ENCODE measurements at regions of chr11 and their contacts with region 1.

Region 1: DNA sequence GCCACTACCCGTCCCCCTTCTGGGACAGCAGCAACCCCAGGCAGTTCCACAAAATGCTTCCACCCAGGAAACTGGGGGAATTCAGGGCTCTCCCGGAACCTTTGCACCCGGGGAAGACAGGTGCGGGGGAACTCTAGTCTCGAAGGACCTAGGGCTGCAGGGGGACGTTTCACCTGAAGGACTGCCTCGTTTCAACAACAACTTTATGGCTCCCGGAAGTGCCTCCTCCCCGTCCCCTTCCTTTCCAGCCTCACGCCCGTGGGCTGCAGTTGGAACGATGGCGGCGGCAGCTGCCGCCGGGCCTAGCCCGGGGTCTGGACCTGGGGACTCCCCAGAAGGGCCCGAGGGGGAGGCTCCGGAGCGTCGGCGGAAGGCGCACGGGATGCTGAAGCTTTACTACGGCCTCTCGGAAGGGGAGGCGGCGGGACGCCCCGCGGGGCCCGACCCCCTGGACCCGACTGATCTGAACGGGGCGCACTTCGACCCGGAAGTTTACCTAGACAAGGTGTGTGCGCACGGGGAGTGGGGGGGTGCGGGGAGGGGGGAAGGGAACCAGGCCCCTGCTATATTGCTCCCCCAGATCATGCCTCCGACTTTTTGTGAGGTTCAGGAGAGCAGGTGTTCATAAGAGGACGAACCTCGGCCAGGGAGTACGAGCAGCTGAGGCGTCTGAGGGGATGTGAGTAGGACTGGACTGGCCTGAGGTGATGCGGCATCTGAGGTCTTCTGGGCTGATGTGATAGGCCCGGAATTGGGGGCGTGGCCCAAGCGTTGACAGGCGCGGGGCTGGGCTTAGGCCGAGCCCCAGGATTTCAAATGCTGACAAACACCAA is at the start of gene VPS51:
- DNase-seq: peak; percentile 90
- ATAC-seq: peak; percentile 99
- H3K4me3 ChIP-seq: peak within 1 kb of the TSS; percentile 41
- H3K27ac ChIP-seq: peak within 1 kb of the TSS; percentile 15
- H3K4me1 ChIP-seq: no peaks in the 10 kb centered on the region
- H3K27me3 ChIP-seq: no peaks in the 10 kb centered on the region
- CTCF ChIP-seq: no peak
- POLR2A ChIP-seq: peak; percentile 97
- RAD21 ChIP-seq: no peak
- total RNA-seq, gene VPS51: 82.5 and 113 TPM in 2 replicates

Region 2: DNA sequence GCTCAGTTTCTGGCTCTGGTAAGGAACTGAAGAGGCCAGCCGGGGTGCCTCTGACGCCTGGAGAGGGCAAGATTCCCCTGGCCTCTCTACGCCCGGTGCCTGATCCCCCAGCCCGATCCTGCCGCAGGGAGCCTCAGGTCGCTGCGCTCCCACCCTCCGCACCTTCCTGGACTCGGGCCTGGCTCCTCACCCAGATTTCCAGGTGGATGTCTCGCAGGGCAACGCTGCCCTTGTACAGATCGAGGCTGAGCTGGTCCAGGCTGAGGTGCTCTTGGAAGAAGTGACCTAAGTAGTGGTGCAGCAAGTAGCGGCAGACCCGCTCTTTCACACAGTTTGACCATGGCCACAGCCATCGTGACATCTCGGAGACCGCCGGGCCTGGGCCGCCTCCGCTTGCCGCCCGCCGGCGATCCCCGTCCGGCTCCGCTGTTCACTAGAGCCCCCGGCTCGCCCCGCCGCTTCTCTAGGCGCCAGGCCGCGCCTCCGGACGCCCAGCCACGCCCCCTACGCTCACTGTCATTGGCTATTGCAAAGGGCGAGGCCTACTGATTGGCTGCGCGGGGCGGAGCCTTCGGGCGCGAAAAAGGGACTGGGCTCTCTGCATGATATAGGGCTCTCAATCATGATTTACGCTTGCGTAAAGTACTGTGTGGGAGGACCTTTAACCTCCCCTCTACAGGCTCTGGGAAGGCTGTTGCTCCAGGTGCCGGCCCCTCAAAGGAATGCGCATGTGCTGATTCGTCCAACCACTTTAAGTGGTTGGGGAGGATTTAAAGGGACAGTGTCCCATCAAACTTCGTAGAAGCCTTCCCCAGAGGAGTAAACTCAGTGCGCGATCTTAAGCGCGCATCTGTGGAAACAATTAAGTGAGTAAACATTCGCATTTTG is 179.2 kb before region 1 on chr11 and contains the start of gene ATG2A:
- CTCF ChIA-PET with region 1: no interaction called
- POLR2A ChIA-PET with region 1: no interaction called
- dilution Hi-C with region 1: no loop called
- in situ Hi-C with region 1: no loop called
- intact Hi-C with region 1: loop called (anchors 5 kb)
- DNase-seq: peak; percentile 100
- ATAC-seq: peak; percentile 97
- H3K4me3 ChIP-seq: peak within 1 kb of the TSS; percentile 78
- H3K27ac ChIP-seq: peak within 1 kb of the TSS; percentile 69
- H3K4me1 ChIP-seq: peaks cover 7% of the 10 kb centered on the region
- H3K27me3 ChIP-seq: no peaks in the 10 kb centered on the region
- CTCF ChIP-seq: no peak
- POLR2A ChIP-seq: peak; percentile 89
- RAD21 ChIP-seq: no peak
- total RNA-seq, gene ATG2A: 3.2 and 3.6 TPM in 2 replicates

Region 3: GRCh38 chr11:65083834-65084597 is 12.2 kb before region 1 on chr11 and contains the starts of genes CDCA5 and ZFPL1:
- CTCF ChIA-PET with region 1: no interaction called
- POLR2A ChIA-PET with region 1: interaction called, 4 read pairs
- dilution Hi-C with region 1: no loop called
- in situ Hi-C with region 1: no loop called
- intact Hi-C with region 1: loop called (anchors 1 kb)
- DNase-seq: peak; percentile 94
- ATAC-seq: peak; percentile 93
- H3K4me3 ChIP-seq: peak within 1 kb of the TSS; percentile 89
- H3K27ac ChIP-seq: peak within 1 kb of the TSS; percentile 100
- H3K4me1 ChIP-seq: peaks cover 4% of the 10 kb centered on the region; the same call in 1 of the 2 replicates
- H3K27me3 ChIP-seq: no peaks in the 10 kb centered on the region
- CTCF ChIP-seq: 0 out of 2 replicates have a peak, but pooled peaks have one; percentile 1
- POLR2A ChIP-seq: peak; percentile 97
- RAD21 ChIP-seq: no peak; the same call in 1 of the 2 replicates
- total RNA-seq, gene CDCA5: 9.1 and 10.0 TPM in 2 replicates
- total RNA-seq, gene ZFPL1: 24.0 and 27.2 TPM in 2 replicates

Region 4: GRCh38 chr11:65111744-65112414 is 15.7 kb after region 1 on chr11 and contains the start of gene TM7SF2:
- CTCF ChIA-PET with region 1: interaction called, 15 read pairs
- POLR2A ChIA-PET with region 1: interaction called, 5 read pairs
- dilution Hi-C with region 1: no loop called
- in situ Hi-C with region 1: no loop called
- intact Hi-C with region 1: no loop called
- DNase-seq: peak; percentile 86
- ATAC-seq: peak; percentile 84
- H3K4me3 ChIP-seq: peak within 1 kb of the TSS; percentile 43
- H3K27ac ChIP-seq: no peak within 1 kb of the TSS
- H3K4me1 ChIP-seq: peaks cover 20% of the 10 kb centered on the region
- H3K27me3 ChIP-seq: no peaks in the 10 kb centered on the region
- CTCF ChIP-seq: no peak
- POLR2A ChIP-seq: peak; percentile 59; the same call in 1 of the 2 replicates
- RAD21 ChIP-seq: no peak
- total RNA-seq, gene TM7SF2: 4.7 and 5.7 TPM in 2 replicates

Region 5: GRCh38 chr11:65135254-65136049 is 39.3 kb after region 1 on chr11:
- CTCF ChIA-PET with region 1: no interaction called
- POLR2A ChIA-PET with region 1: no interaction called
- dilution Hi-C with region 1: no loop called
- in situ Hi-C with region 1: no loop called
- intact Hi-C with region 1: no loop called
- DNase-seq: no peak
- ATAC-seq: no peak
- H3K4me3 ChIP-seq: peak overlapping the region; percentile 63
- H3K27ac ChIP-seq: peak overlapping the region; percentile 54
- H3K4me1 ChIP-seq: peaks cover 6% of the 10 kb centered on the region; the same call in 1 of the 2 replicates
- H3K27me3 ChIP-seq: no peaks in the 10 kb centered on the region
- CTCF ChIP-seq: no peak
- POLR2A ChIP-seq: no peak
- RAD21 ChIP-seq: no peak

Region 6: DNA sequence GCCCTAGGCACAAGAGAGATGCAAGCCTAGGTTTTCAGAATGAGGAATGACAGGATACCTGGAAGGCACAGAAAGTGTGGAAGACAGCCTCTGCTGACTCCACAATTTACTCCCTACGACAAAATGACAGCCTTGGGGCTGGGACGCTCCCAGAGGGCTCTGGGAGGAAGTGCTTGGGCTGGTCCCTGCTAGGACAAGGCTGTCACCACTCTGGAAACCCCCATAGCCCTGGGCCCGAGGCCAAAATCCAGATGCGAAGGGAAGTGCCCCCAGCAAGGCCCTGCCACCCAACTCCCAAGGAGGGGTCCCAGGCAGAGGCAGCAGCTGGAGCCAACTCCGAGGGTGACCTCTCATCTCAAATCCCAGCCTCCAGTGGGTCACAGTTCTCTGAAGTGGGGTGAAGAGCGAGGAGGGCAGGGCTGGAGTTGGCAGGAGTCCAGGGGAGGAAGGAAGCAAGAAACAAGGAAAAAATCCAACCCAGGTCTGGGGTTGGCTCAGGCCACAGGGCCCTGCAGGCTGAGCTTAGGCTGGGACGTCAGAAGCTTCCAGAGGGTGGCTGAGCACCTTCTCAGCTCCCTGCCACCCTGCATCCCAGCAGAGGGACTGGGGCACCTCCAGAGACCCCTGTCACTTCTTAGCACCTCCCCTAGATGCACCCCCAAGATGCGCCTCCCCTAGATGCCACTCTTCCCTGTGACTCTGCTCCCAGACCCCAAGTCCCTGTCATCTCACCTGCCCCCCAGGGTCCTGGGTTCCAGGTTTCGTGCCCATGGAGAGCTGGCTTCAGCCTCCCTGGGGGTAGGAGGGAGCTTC is 212.3 kb after region 1 on chr11:
- CTCF ChIA-PET with region 1: no interaction called
- POLR2A ChIA-PET with region 1: no interaction called
- dilution Hi-C with region 1: no loop called
- in situ Hi-C with region 1: no loop called
- intact Hi-C with region 1: no loop called
- DNase-seq: no peak
- ATAC-seq: no peak
- H3K4me3 ChIP-seq: no peak overlapping the region
- H3K27ac ChIP-seq: no peak overlapping the region
- H3K4me1 ChIP-seq: peaks cover 43% of the 10 kb centered on the region
- H3K27me3 ChIP-seq: no peaks in the 10 kb centered on the region
- CTCF ChIP-seq: no peak
- POLR2A ChIP-seq: no peak
- RAD21 ChIP-seq: no peak